ENCODE measurements at regions of chr2 and their contacts with region 1.

Region 1: DNA sequence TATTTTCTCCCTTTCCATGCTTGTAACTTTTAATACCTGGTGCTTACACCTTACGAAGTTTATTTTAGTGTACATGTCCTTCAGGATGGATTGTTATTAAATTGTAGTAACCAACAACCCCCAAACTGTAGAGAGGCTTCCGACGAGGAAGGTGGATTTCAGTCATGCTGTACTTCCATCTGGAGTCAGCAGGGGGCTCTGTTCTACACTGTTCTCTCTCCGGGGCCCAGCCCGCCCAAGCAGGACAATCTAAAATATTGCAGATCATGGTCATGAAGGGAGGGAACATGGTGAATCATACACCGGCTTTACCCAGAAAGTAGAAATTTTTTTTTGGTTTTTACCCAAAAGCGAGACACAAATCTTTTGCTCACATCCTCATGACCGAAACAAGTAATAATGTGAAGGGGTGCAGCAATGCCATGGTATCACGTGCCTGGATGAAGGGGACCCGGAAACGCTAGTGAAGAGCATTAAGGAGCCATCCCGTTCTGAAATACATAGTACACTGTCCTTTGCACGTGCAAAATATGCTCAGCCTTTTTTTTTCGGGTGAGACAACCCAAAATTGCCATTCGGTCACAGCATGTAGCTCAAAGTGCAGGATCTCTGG is 884.8 kb downstream of the EPHA4 start:
- DNase-seq: peak; percentile 64 to 73
- ATAC-seq: peak; percentile 81 to 97 (median 85)
- H3K4me3 ChIP-seq: no peak overlapping the region
- H3K27ac ChIP-seq: no peak overlapping the region
- H3K4me1 ChIP-seq: no peaks in the 10 kb centered on the region
- H3K27me3 ChIP-seq: no peaks in the 10 kb centered on the region
- CTCF ChIP-seq: peak; percentile 88

Region 2: DNA sequence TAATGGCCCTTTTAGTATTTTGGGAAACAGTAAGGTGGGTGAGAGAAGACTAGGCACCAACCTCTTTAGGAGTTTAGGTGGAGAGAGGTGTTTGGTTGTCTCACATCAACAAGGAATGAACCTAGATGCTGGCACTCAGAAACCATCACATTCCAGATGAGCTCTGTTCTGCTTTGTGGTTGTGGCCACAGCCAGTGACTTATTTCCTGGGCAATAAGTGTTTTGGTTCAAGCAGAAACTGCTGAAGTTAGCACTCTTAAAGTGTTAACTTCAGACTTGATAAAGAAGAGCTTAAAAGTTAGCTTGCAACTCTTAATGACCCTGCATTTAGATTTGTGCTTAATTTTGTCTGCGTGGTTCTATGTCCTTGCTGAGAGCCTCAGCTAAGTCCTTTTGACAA is 130.7 kb before region 1 on chr2:
- intact Hi-C with region 1: no loop called
- DNase-seq: no peak
- ATAC-seq: no peak
- H3K4me3 ChIP-seq: no peak overlapping the region
- H3K27ac ChIP-seq: no peak overlapping the region
- H3K4me1 ChIP-seq: no peaks in the 10 kb centered on the region
- H3K27me3 ChIP-seq: no peaks in the 10 kb centered on the region
- CTCF ChIP-seq: no peak

Region 3: GRCh38 chr2:220590476-220590875 is 96.9 kb before region 1 on chr2:
- intact Hi-C with region 1: no loop called
- DNase-seq: no peak
- ATAC-seq: no peak
- H3K4me3 ChIP-seq: no peak overlapping the region
- H3K27ac ChIP-seq: no peak overlapping the region
- H3K4me1 ChIP-seq: no peaks in the 10 kb centered on the region
- H3K27me3 ChIP-seq: peaks cover 0 to 4% (median 0%) of the 10 kb centered on the region in 3 donors
- CTCF ChIP-seq: no peak

Region 4: GRCh38 chr2:220601674-220602073 is 85.7 kb before region 1 on chr2:
- intact Hi-C with region 1: no loop called
- DNase-seq: no peak
- ATAC-seq: no peak
- H3K4me3 ChIP-seq: no peak overlapping the region
- H3K27ac ChIP-seq: no peak overlapping the region
- H3K4me1 ChIP-seq: no peaks in the 10 kb centered on the region
- H3K27me3 ChIP-seq: no peaks in the 10 kb centered on the region
- CTCF ChIP-seq: no peak

Region 5: GRCh38 chr2:220880623-220881596 is 193.6 kb after region 1 on chr2:
- intact Hi-C with region 1: loop called in 1 of 2 experiments (anchors 10 kb)
- DNase-seq: no peak
- ATAC-seq: no peak
- H3K4me3 ChIP-seq: no peak overlapping the region
- H3K27ac ChIP-seq: no peak overlapping the region
- H3K4me1 ChIP-seq: no peaks in the 10 kb centered on the region
- H3K27me3 ChIP-seq: no peaks in the 10 kb centered on the region
- CTCF ChIP-seq: no peak

Region 6: GRCh38 chr2:221104361-221104811 is 417.0 kb after region 1 on chr2:
- intact Hi-C with region 1: loop called in 1 of 2 experiments (anchors 10 kb)
- DNase-seq: peak; percentile 74 to 83
- ATAC-seq: peak; percentile 88 to 98 (median 95)
- H3K4me3 ChIP-seq: peak overlapping the region; percentile 25
- H3K27ac ChIP-seq: no peak overlapping the region
- H3K4me1 ChIP-seq: peaks cover 7% of the 10 kb centered on the region
- H3K27me3 ChIP-seq: peaks cover 0 to 2% (median 0%) of the 10 kb centered on the region in 3 donors
- CTCF ChIP-seq: peak; percentile 8

Region 7: DNA sequence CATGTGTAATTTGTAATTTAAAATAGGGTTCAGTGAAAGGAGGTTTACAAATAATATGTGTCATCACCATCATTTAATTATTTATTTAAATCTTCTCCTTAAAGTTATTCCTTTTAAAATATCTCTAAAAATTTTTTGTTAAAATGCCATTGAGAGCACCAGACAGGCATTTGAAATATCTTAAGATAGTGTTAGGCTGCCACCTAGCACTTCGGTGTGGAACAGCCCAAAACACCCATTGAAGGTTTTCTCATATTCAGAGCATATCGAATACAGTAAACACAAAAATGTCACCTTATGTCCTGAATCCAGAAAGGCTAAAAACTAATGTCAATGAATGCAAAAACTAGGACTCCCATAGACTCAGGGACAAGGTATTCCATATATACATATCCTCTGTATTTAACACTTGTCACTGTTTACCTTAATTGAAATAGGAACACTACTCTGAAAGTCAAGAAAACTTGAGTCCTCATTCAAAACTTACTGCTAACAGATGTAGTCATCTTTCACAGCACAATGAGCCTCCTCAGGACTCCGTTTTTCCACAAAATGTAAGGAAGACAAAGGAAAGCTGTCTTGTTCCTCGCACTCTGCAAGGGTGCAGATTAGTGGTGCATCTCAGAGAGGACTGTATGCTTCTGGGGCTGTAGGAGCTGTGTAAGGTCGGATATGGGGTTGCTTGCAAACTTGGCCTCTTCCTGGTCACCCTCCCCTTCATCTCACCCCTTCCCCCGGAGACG is 1281.9 kb after region 1 on chr2:
- intact Hi-C with region 1: loop called in 1 of 2 experiments (anchors 5 kb)
- DNase-seq: no peak
- ATAC-seq: peak in 1 of 4 donors; percentile 53
- H3K4me3 ChIP-seq: no peak overlapping the region
- H3K27ac ChIP-seq: no peak overlapping the region
- H3K4me1 ChIP-seq: no peaks in the 10 kb centered on the region
- H3K27me3 ChIP-seq: no peaks in the 10 kb centered on the region
- CTCF ChIP-seq: peak; percentile 48

Measured in psoas muscle (tissue), 8 donors.